Caco-2 (cell line): ENCODE measurements at regions of chr4 and their contacts with region 1.

Region 1: DNA sequence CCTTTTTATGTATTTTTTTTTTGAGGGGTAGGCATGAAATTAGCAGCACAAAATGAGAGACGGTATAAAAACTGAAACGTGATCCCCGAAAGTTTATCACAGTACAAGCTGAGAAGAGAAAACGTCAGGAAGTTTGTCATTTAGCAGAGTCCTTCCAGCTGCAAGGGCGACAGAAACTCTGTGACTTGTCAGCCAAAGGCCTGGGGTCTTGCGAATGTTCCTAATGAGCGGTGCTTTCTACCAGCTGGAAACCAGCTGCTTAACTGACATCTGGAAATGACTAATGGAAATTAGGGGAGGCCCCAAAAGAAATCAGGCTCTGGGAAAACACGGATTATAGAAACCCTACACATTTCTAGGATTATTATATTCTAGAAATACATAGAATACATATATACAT is 66.5 kb downstream of the CHRNA9 start:
- DNase-seq: no peak
- H3K4me3 ChIP-seq: no peak overlapping the region
- H3K4me3 Mint-ChIP-seq: no peak overlapping the region
- H3K27ac Mint-ChIP-seq: no peak overlapping the region
- H3K4me1 ChIP-seq: peaks cover 37% of the 10 kb centered on the region
- H3K4me1 Mint-ChIP-seq: peaks cover 25% of the 10 kb centered on the region
- H3K27me3 ChIP-seq: no peaks in the 10 kb centered on the region
- H3K27me3 Mint-ChIP-seq: no peaks in the 10 kb centered on the region
- CTCF ChIP-seq: no peak

Region 2: GRCh38 chr4:39642885-39643550 is 758.6 kb before region 1 on chr4:
- CTCF ChIA-PET with region 1: no interaction called
- POLR2A ChIA-PET with region 1: no interaction called
- intact Hi-C with region 1: no loop called
- DNase-seq: no peak
- H3K4me3 ChIP-seq: no peak overlapping the region
- H3K4me3 Mint-ChIP-seq: no peak overlapping the region
- H3K27ac Mint-ChIP-seq: no peak overlapping the region
- H3K4me1 ChIP-seq: peaks cover 6% of the 10 kb centered on the region; the same call in 1 of the 2 replicates
- H3K4me1 Mint-ChIP-seq: no peaks in the 10 kb centered on the region
- H3K27me3 ChIP-seq: no peaks in the 10 kb centered on the region
- H3K27me3 Mint-ChIP-seq: no peaks in the 10 kb centered on the region
- CTCF ChIP-seq: no peak

Region 3: GRCh38 chr4:40325189-40326019 is 76.2 kb before region 1 on chr4:
- CTCF ChIA-PET with region 1: no interaction called
- POLR2A ChIA-PET with region 1: no interaction called
- intact Hi-C with region 1: loop called (anchors 1 kb)
- DNase-seq: peak; percentile 55 to 59
- H3K4me3 ChIP-seq: no peak overlapping the region
- H3K4me3 Mint-ChIP-seq: no peak overlapping the region
- H3K27ac Mint-ChIP-seq: no peak overlapping the region
- H3K4me1 ChIP-seq: peaks cover 9% of the 10 kb centered on the region; the same call in 1 of the 2 replicates
- H3K4me1 Mint-ChIP-seq: peaks cover 17% of the 10 kb centered on the region
- H3K27me3 ChIP-seq: no peaks in the 10 kb centered on the region; the same call in 1 of the 2 replicates
- H3K27me3 Mint-ChIP-seq: no peaks in the 10 kb centered on the region
- CTCF ChIP-seq: peak; percentile 76 to 83

Region 4: GRCh38 chr4:40369437-40370274 is 32.0 kb before region 1 on chr4:
- CTCF ChIA-PET with region 1: no interaction called
- POLR2A ChIA-PET with region 1: no interaction called
- intact Hi-C with region 1: loop called (anchors 1 kb)
- DNase-seq: peak; percentile 50 to 75
- H3K4me3 ChIP-seq: no peak overlapping the region
- H3K4me3 Mint-ChIP-seq: no peak overlapping the region
- H3K27ac Mint-ChIP-seq: peak overlapping the region; percentile 56
- H3K4me1 ChIP-seq: peaks cover 28% of the 10 kb centered on the region
- H3K4me1 Mint-ChIP-seq: peaks cover 32% of the 10 kb centered on the region
- H3K27me3 ChIP-seq: no peaks in the 10 kb centered on the region
- H3K27me3 Mint-ChIP-seq: no peaks in the 10 kb centered on the region
- CTCF ChIP-seq: no peak

Region 5: DNA sequence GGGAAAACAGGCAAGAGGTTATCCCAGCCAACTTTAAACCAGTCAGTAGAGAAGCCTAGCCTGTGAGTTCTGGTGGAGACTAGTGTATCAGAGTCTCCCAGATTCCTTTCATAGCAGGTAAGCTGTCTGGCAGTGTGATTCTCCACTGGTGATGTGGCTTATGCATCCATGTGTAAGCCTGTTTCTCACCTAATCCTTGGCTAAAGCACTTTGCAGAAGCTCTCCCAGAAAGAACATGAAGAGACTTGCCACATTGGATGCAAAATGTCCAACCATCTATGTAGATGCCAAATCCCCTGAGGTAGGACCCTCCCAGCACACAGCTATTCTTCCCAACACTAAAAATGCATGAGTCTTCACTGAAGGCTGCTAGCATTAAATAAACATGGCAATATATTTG is 45.2 kb after region 1 on chr4:
- CTCF ChIA-PET with region 1: no interaction called
- POLR2A ChIA-PET with region 1: no interaction called
- intact Hi-C with region 1: loop called (anchors 5 kb)
- DNase-seq: no peak
- H3K4me3 ChIP-seq: no peak overlapping the region
- H3K4me3 Mint-ChIP-seq: no peak overlapping the region
- H3K27ac Mint-ChIP-seq: peak overlapping the region; percentile 60
- H3K4me1 ChIP-seq: peaks cover 39% of the 10 kb centered on the region
- H3K4me1 Mint-ChIP-seq: peaks cover 7% of the 10 kb centered on the region
- H3K27me3 ChIP-seq: no peaks in the 10 kb centered on the region
- H3K27me3 Mint-ChIP-seq: no peaks in the 10 kb centered on the region
- CTCF ChIP-seq: no peak

Region 6: DNA sequence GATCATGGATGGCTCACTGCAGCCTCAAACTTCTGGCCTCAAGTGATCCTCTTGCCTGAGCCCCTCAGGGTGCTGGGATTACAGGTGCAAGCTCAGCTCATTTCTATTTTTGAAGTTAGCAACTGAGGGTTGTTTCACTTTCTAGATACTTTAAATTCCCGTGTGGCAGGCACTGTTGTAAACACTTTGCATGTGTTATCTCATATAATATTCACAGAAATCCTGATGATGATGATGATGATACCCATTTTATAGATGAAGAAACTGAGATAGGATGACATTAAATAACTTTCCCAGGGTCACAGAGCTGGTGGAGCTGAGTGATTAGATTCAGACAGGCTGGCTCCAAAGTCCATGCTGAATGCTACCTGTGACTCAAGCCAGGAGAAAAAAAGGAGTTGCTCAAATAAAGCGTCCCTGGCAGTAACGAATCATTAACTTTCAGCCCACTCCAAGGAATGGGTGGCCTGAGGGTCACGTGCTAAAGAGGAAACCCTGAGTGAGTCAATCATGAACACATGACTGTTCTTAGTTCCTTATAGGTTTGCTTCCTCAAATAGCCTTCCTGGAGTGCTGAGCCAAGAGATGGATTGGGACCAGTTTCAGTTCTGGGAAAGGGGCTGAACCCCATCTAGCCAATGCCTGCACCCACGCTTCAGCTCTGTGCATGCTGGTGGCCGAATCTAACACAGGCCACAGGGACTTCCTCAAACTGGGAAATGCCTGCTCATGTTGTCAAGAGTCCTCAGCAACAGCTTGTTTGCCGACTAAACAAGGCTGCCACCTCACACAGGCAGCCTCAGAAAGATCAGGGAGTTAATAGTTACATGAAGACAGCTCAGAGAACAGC is 175.2 kb after region 1 on chr4:
- CTCF ChIA-PET with region 1: no interaction called
- POLR2A ChIA-PET with region 1: no interaction called
- intact Hi-C with region 1: loop called (anchors 2 kb)
- DNase-seq: peak; percentile 92 to 96
- H3K4me3 ChIP-seq: peak overlapping the region; percentile 14
- H3K4me3 Mint-ChIP-seq: peak overlapping the region; percentile 73
- H3K27ac Mint-ChIP-seq: peak overlapping the region; percentile 97
- H3K4me1 ChIP-seq: peaks cover 33% of the 10 kb centered on the region
- H3K4me1 Mint-ChIP-seq: peaks cover 45% of the 10 kb centered on the region
- H3K27me3 ChIP-seq: no peaks in the 10 kb centered on the region
- H3K27me3 Mint-ChIP-seq: no peaks in the 10 kb centered on the region
- CTCF ChIP-seq: no peak

Region 7: GRCh38 chr4:40621592-40622512 is 220.2 kb after region 1 on chr4:
- CTCF ChIA-PET with region 1: no interaction called
- POLR2A ChIA-PET with region 1: no interaction called
- intact Hi-C with region 1: no loop called
- DNase-seq: peak; percentile 53 to 64
- H3K4me3 ChIP-seq: no peak overlapping the region
- H3K4me3 Mint-ChIP-seq: no peak overlapping the region
- H3K27ac Mint-ChIP-seq: peak overlapping the region; percentile 6
- H3K4me1 ChIP-seq: peaks cover 13% of the 10 kb centered on the region
- H3K4me1 Mint-ChIP-seq: peaks cover 26% of the 10 kb centered on the region
- H3K27me3 ChIP-seq: no peaks in the 10 kb centered on the region
- H3K27me3 Mint-ChIP-seq: no peaks in the 10 kb centered on the region
- CTCF ChIP-seq: no peak